ENCODE measurements at regions of chr11 and their contacts with region 1.

Region 1: GRCh38 chr11:33687733-33688479 is 12.7 kb downstream of the C11orf91 start:
- DNase-seq: peak; percentile 82
- ATAC-seq: no peak
- H3K4me3 ChIP-seq: no peak overlapping the region
- H3K27ac ChIP-seq: peak overlapping the region; percentile 100
- H3K4me1 ChIP-seq: peaks cover 51% of the 10 kb centered on the region
- H3K27me3 ChIP-seq: no peaks in the 10 kb centered on the region
- CTCF ChIP-seq: peak; percentile 97

Region 2: GRCh38 chr11:33257897-33258630 is 429.8 kb before region 1 on chr11:
- CTCF ChIA-PET with region 1: no interaction called
- POLR2A ChIA-PET with region 1: no interaction called
- intact Hi-C with region 1: loop called (anchors 5 kb)
- DNase-seq: peak; percentile 79
- ATAC-seq: peak; percentile 49
- H3K4me3 ChIP-seq: peak overlapping the region; percentile 84
- H3K27ac ChIP-seq: peak overlapping the region; percentile 92
- H3K4me1 ChIP-seq: peaks cover 18% of the 10 kb centered on the region
- H3K27me3 ChIP-seq: no peaks in the 10 kb centered on the region
- CTCF ChIP-seq: no peak

Region 3: DNA sequence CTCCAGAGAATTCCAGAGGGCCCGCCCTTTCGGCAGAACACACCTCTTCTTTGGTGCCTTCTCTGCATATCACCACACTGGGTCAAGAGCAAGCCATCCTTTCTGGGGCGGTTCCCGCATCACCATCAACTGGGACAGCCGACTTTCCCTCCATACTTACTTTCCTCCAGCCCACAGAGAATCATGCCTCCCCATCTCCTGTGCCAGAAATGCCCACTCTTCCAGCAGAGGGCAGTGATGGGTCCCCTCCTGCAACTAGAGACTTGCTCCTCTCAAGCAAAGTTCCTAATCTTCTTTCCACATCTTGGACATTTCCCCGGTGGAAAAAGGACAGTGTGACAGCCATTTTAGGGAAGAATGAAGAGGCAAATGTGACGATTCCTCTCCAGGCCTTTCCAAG is 145.0 kb before region 1 on chr11:
- CTCF ChIA-PET with region 1: no interaction called
- POLR2A ChIA-PET with region 1: no interaction called
- intact Hi-C with region 1: loop called (anchors 1 kb)
- DNase-seq: peak; percentile 72
- ATAC-seq: peak; percentile 68
- H3K4me3 ChIP-seq: no peak overlapping the region
- H3K27ac ChIP-seq: no peak overlapping the region
- H3K4me1 ChIP-seq: peaks cover 27% of the 10 kb centered on the region
- H3K27me3 ChIP-seq: no peaks in the 10 kb centered on the region
- CTCF ChIP-seq: peak; percentile 79

Region 4: DNA sequence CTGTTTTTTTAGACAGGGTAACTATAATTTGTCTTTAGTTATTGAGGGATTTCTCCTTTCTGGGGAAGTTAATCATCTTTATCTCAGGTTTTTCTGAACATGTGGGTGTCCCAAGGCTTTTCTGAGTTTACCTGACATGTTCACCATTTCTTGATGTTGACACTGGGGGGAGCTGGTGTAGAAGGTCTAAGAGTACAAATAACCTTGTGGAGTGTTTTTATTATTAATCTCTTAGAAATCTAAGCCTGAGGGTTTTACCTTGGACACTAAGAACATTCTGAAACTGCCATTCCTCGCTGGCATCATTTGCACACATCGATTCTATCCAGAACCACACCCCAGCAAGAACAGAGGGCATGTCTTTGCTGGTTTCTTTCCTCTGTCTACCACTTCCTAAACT is 28.3 kb after region 1 on chr11:
- CTCF ChIA-PET with region 1: interaction called, 10 read pairs
- POLR2A ChIA-PET with region 1: interaction called, 5 read pairs
- intact Hi-C with region 1: loop called (anchors 1 kb)
- DNase-seq: peak; percentile 65
- ATAC-seq: peak; percentile 58
- H3K4me3 ChIP-seq: no peak overlapping the region
- H3K27ac ChIP-seq: peak overlapping the region; percentile 85
- H3K4me1 ChIP-seq: peaks cover 57% of the 10 kb centered on the region
- H3K27me3 ChIP-seq: no peaks in the 10 kb centered on the region
- CTCF ChIP-seq: peak; percentile 59

Region 5: DNA sequence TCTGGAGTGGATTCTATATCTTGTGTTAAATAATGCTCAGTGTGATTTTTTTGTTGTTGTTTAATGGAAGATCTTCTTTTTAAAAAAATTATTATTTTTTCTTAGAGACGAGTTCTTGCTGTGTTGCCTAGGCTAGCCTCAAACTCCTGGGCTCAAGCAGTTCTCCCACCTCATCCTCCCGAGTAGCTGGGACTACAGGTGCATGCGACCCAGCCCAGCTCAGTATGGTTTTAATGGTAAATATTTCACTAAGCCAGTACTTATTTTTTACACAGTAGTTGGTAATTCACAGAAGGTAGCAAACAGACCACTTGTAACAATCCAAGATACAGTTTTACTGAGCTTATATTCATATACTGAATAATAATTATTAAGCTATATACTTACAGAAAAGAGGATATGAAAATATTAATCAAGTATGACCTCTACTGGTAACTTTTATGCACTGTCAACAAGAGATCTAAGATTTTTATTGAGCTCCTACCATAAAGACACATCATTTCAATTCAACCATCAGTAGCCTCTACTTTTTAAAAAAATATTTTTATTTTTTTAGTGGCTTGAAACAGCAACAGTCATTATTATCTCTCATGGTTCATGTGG is 54.4 kb after region 1 on chr11:
- CTCF ChIA-PET with region 1: interaction called, 44 read pairs
- POLR2A ChIA-PET with region 1: interaction called, 15 read pairs
- intact Hi-C with region 1: no loop called
- DNase-seq: peak; percentile 60
- ATAC-seq: peak; percentile 72
- H3K4me3 ChIP-seq: no peak overlapping the region
- H3K27ac ChIP-seq: 0 out of 2 replicates have a peak overlapping the region, but pooled peaks have one; percentile 5
- H3K4me1 ChIP-seq: peaks cover 9% of the 10 kb centered on the region
- H3K27me3 ChIP-seq: no peaks in the 10 kb centered on the region
- CTCF ChIP-seq: peak; percentile 66

Region 6: GRCh38 chr11:33753304-33753967 is 65.5 kb after region 1 on chr11:
- CTCF ChIA-PET with region 1: no interaction called
- POLR2A ChIA-PET with region 1: no interaction called
- intact Hi-C with region 1: no loop called
- DNase-seq: peak; percentile 21
- ATAC-seq: peak; percentile 50
- H3K4me3 ChIP-seq: no peak overlapping the region
- H3K27ac ChIP-seq: no peak overlapping the region
- H3K4me1 ChIP-seq: peaks cover 10% of the 10 kb centered on the region; the same call in 1 of the 2 replicates
- H3K27me3 ChIP-seq: no peaks in the 10 kb centered on the region
- CTCF ChIP-seq: no peak

Measured in PC-3 (cell line).